RWPE1 (cell line): ENCODE measurements at regions of chr2 and their contacts with region 1.

Region 1: DNA sequence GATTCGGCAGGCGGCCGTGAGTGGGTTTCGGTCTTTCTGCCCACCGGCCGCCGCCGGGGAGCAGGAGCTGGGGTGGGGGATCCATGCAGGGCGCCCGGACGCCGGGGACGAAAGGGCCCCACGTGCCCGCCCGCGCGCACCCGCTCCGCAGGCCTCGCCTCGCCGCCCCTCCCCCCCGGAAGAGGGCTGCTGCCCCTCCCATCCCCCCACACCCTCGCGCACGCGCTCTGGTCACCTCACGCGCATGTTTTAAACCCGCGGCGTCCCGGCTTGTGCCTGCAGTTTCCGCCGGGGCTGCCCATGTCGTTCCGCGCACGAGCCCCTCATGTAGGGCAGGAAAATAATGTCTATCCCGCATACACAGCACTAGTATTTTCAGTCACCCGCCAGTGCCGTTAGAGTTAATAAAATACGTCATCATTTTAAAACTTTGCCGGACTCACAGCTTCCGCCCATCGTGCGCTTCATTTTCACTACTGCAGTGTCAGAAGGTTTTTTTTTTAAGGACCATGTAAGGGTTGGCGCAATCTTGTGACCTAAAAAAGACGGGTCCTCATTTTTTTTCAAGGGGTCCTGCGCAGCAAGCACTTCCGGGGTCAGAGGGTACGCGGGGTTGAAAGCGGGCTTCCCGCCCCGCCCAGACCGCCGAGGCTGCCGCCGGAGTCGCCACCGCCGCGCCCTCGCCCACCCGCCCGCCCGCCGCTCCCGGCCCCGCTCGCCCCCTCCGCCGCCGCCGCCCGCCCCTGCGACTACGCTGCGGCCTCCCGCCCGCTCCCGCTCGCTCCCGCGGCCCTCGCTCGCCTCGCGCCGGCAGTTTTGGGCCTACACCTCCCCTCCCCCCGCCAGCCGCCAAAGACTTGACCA is at the start of gene PCBP1:
- DNase-seq: peak; percentile 93
- H3K27ac ChIP-seq: peak within 1 kb of the TSS; percentile 99
- CTCF ChIP-seq: no peak

Region 2: DNA sequence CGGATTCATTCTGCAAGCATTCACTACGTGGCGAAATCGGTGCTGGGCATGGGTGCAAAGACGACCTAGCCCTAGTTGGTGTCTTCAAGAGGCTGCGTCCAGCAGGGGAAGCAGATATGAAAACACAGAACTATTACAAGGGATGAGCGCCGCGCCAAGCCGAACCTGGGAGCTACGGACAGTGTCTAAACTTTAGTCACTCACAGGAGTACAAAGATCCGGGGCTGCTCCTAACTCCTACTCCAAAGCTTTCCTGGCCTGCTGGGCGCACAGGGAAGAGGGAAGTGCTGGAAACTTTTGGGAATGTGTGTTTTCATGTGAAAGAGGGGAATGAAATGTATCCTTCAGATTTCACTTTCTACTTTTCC is 345.8 kb before region 1 on chr2:
- CTCF ChIA-PET with region 1: no interaction called
- POLR2A ChIA-PET with region 1: interaction called, 10 read pairs
- DNase-seq: peak; percentile 72
- H3K27ac ChIP-seq: peak overlapping the region; percentile 99
- CTCF ChIP-seq: no peak

Region 3: GRCh38 chr2:70142590-70143313 is 55.7 kb after region 1 on chr2:
- CTCF ChIA-PET with region 1: interaction called, 4 read pairs
- POLR2A ChIA-PET with region 1: interaction called, 19 read pairs
- DNase-seq: peak; percentile 98
- H3K27ac ChIP-seq: peak overlapping the region; percentile 96
- CTCF ChIP-seq: peak; percentile 95

Region 4: DNA sequence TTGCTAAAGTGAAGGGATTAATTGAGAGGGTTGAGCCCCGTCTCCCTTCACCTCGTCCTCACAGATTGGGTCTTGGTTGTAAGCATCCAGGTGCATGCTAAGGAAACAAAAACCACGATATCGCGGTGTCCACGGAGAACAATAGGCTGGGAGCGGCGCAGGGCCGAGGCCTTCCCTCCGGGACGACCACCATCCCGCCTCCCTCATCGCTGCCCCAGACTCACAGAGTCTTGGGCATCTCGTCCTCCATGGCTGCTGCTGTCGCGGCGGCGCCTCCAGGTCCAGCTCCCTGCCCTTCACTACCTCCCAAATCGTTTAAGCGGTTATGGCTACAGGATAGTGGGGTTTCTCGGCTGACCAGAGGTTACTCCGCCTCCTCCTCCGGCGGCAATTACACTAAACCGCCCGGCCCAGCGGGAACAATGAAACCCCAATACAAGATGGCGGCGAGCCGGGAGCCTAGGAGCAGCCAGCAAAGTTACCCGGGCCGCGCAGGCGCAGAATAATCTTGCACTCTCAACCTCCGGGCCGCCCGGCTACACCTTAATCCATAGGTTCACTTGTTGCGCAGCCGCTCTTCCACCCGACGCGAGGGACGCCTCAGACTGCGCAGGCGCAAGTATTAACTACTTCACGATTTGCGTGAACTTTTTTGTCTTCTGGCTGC is 161.2 kb after region 1 on chr2 and contains the start of gene TIA1:
- CTCF ChIA-PET with region 1: no interaction called
- POLR2A ChIA-PET with region 1: interaction called, 15 read pairs
- DNase-seq: peak; percentile 98
- H3K27ac ChIP-seq: peak within 1 kb of the TSS; percentile 96
- CTCF ChIP-seq: no peak

Region 5: GRCh38 chr2:70425687-70426301 is 338.7 kb after region 1 on chr2:
- CTCF ChIA-PET with region 1: no interaction called
- POLR2A ChIA-PET with region 1: no interaction called
- DNase-seq: no peak
- H3K27ac ChIP-seq: no peak overlapping the region
- CTCF ChIP-seq: no peak